ENCODE measurements at regions of chr1 and their contacts with region 1.

Region 1: GRCh38 chr1:6653436-6654290 is 29.0 kb downstream of the THAP3 start:
- DNase-seq: peak; percentile 50
- H3K4me3 ChIP-seq: no peak overlapping the region
- H3K27ac ChIP-seq: no peak overlapping the region
- H3K4me1 ChIP-seq: peaks cover 12% of the 10 kb centered on the region
- H3K27me3 ChIP-seq: no peaks in the 10 kb centered on the region
- CTCF ChIP-seq: no peak

Region 2: DNA sequence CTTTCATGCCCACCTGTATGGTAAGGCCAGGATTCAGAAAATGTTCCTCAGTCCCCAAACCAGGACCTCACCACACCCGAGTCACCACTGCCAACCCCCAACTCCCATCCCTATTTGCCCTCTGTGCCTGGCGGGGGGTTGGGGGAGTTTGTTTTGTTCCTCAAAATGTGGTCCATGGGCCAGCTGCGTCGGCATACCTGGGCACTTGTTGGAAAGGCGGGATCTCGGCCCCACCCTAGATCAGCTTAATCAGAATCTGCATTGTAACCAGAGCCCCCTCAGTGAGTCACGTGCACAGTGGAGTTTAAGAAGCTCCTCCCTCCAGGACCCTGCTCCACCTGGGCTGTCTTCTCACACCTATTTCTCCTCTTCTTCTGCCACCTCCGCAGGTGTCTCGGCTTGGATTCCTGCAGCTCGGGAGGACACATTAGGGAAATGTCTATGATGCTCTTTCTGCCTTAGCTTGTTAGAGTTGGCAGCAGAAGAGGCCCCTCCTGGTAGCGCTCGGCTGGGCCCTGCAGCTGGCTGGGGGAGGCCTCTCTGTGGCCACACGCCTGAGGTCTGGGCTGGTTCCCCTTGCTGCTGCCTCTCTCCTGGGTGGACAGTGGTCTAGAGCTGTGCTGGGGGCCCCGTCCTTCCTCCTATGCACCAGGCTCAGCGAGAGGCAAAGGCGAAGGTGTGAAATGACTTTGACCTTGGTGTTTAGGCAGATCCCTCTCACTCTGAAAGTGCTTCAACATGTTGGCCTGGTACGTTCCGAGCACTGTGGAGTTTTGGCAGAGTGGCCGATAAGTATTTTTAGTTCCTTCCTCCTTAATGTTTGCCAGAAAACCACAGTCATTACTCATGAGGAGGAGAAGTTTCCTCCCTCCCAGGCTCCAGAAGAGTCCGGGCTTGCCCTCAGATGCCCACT is 89.8 kb after region 1 on chr1:
- CTCF ChIA-PET with region 1: no interaction called
- POLR2A ChIA-PET with region 1: no interaction called
- intact Hi-C with region 1: no loop called
- DNase-seq: no peak
- H3K4me3 ChIP-seq: no peak overlapping the region
- H3K27ac ChIP-seq: no peak overlapping the region
- H3K4me1 ChIP-seq: no peaks in the 10 kb centered on the region
- H3K27me3 ChIP-seq: peaks cover 21% of the 10 kb centered on the region
- CTCF ChIP-seq: no peak

Region 3: GRCh38 chr1:7808253-7808844 is 1154.7 kb after region 1 on chr1:
- CTCF ChIA-PET with region 1: no interaction called
- POLR2A ChIA-PET with region 1: interaction called, 13 read pairs
- intact Hi-C with region 1: no loop called
- DNase-seq: peak; percentile 65
- H3K4me3 ChIP-seq: no peak overlapping the region
- H3K27ac ChIP-seq: no peak overlapping the region
- H3K4me1 ChIP-seq: no peaks in the 10 kb centered on the region
- H3K27me3 ChIP-seq: no peaks in the 10 kb centered on the region
- CTCF ChIP-seq: peak; percentile 72